PC-3 (cell line): ENCODE measurements at regions of chr14 and their contacts with region 1.

Region 1: DNA sequence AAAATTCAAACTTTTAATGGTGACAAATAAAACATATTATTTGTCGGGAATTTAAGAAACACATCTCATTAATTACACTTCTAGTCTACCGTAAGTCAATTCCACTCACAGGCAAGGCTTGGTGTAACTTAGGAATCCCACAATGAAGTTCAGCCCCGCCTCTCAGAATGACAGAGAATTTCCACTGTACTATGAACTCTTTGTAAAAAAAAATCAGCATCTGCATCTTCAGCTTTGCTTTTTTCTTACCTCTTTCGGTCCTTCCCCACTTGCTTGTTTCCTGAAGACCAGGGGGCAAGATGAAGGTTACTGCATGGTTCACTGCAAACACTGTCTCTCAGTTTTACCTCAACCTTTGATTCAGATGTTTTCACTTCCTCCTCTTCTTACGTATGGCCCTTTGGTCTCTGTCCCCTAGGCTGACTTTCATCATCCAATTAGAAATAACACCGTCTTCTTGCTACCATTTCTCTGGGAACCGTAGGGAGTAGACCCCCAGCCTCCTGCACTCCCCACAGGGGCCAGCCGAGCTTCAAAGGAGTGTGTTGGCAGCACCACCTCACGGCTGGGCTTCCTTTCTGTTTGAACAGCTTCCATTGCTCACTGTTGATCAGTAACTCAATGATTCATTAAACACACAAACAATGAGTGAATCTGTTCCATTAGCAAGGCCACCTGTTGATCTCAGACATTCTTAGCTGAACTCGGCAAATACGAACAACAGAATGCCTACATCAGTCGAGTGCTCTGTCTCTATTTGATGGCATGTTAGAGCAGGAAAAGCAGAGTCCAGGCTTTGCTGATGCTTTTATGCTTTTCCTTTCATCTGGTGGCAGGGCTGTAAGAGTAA is 343.0 kb downstream of the BMP4 start:
- DNase-seq: peak; percentile 92
- ATAC-seq: peak; percentile 98
- H3K4me3 ChIP-seq: peak overlapping the region; percentile 46
- H3K27ac ChIP-seq: peak overlapping the region; percentile 30
- H3K4me1 ChIP-seq: peaks cover 18% of the 10 kb centered on the region
- H3K27me3 ChIP-seq: no peaks in the 10 kb centered on the region
- CTCF ChIP-seq: peak; percentile 40; the same call in 1 of the 2 replicates

Region 2: DNA sequence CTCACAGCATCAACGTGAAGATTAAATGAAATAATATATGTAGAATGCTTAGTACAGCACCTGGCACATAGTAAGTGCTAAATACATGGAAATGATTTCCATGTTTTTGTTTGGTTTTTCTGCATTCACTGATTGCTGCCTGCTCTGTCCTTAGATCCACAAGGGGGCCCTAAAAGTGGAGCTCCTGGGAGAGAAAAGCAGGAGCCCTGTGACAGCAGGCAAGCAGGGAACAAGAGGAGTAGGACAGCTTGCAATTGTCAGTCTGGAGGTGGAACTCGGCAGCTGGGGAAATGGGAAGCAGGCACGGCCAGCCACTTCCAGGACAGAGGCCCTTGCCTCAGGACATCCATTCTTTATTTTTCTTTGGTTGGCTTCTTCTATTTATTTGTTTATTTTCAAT is 50.1 kb after region 1 on chr14:
- CTCF ChIA-PET with region 1: interaction called, 10 read pairs
- POLR2A ChIA-PET with region 1: no interaction called
- intact Hi-C with region 1: no loop called
- DNase-seq: peak; percentile 53
- ATAC-seq: peak; percentile 93
- H3K4me3 ChIP-seq: no peak overlapping the region
- H3K27ac ChIP-seq: no peak overlapping the region
- H3K4me1 ChIP-seq: no peaks in the 10 kb centered on the region
- H3K27me3 ChIP-seq: peaks cover 2% of the 10 kb centered on the region; the same call in 1 of the 2 replicates
- CTCF ChIP-seq: peak; percentile 70